ENCODE measurements at regions of chr11 and their contacts with region 1.

Region 1: GRCh38 chr11:62855571-62856332 is 16.4 kb upstream of the WDR74 start:
- DNase-seq: peak; percentile 98

Region 2: GRCh38 chr11:62880803-62881578 is 25.2 kb after region 1 on chr11 and contains the start of gene SLC3A2:
- intact Hi-C with region 1: loop called (anchors 2 kb)
- DNase-seq: peak; percentile 94
- total RNA-seq, gene SLC3A2: 38.6 TPM

Measured in cardiac septum (tissue), 1 donor.